PC-3 (cell line): ENCODE measurements at regions of chr13 and their contacts with region 1.

Region 1: GRCh38 chr13:68358294-68358705 is 1128.2 kb upstream of the PCDH9 start:
- DNase-seq: peak; percentile 61
- ATAC-seq: peak; percentile 88
- H3K4me3 ChIP-seq: peak overlapping the region; percentile 23; the same call in 1 of the 2 replicates
- H3K27ac ChIP-seq: peak overlapping the region; percentile 82
- H3K4me1 ChIP-seq: peaks cover 16% of the 10 kb centered on the region
- H3K27me3 ChIP-seq: no peaks in the 10 kb centered on the region
- CTCF ChIP-seq: no peak

Region 2: GRCh38 chr13:67914535-67914934 is 443.8 kb before region 1 on chr13:
- CTCF ChIA-PET with region 1: no interaction called
- POLR2A ChIA-PET with region 1: no interaction called
- intact Hi-C with region 1: no loop called
- DNase-seq: no peak
- ATAC-seq: no peak
- H3K4me3 ChIP-seq: no peak overlapping the region
- H3K27ac ChIP-seq: no peak overlapping the region
- H3K4me1 ChIP-seq: no peaks in the 10 kb centered on the region
- H3K27me3 ChIP-seq: no peaks in the 10 kb centered on the region
- CTCF ChIP-seq: no peak

Region 3: DNA sequence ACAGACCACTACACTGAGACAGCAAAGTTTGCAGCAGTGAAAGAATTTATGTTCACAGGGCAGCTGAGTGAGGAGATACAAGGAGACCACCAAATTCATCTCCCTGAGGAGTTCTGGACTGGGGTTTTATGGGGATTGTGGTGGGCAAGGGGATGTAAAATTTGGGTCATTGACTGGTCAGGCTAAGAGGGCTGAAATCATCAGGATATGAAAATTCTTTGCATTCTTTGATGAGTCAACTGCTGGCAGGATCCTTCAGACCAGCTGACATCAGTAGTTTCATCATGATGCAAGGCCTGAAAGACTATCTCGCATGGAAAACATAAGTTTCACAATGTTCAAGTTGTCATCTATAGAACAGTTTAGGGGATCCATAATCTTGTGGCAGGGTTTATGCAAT is 258.7 kb before region 1 on chr13:
- CTCF ChIA-PET with region 1: no interaction called
- POLR2A ChIA-PET with region 1: no interaction called
- intact Hi-C with region 1: no loop called
- DNase-seq: peak; percentile 61
- ATAC-seq: peak; percentile 73
- H3K4me3 ChIP-seq: no peak overlapping the region
- H3K27ac ChIP-seq: no peak overlapping the region
- H3K4me1 ChIP-seq: peaks cover 6% of the 10 kb centered on the region; the same call in 1 of the 2 replicates
- H3K27me3 ChIP-seq: no peaks in the 10 kb centered on the region
- CTCF ChIP-seq: no peak

Region 4: GRCh38 chr13:68369739-68370138 is 11.4 kb after region 1 on chr13:
- CTCF ChIA-PET with region 1: no interaction called
- POLR2A ChIA-PET with region 1: no interaction called
- intact Hi-C with region 1: loop called (anchors 1 kb)
- DNase-seq: peak; percentile 68
- ATAC-seq: peak; percentile 99
- H3K4me3 ChIP-seq: no peak overlapping the region
- H3K27ac ChIP-seq: peak overlapping the region; percentile 73
- H3K4me1 ChIP-seq: peaks cover 22% of the 10 kb centered on the region; the same call in 1 of the 2 replicates
- H3K27me3 ChIP-seq: no peaks in the 10 kb centered on the region
- CTCF ChIP-seq: no peak

Region 5: DNA sequence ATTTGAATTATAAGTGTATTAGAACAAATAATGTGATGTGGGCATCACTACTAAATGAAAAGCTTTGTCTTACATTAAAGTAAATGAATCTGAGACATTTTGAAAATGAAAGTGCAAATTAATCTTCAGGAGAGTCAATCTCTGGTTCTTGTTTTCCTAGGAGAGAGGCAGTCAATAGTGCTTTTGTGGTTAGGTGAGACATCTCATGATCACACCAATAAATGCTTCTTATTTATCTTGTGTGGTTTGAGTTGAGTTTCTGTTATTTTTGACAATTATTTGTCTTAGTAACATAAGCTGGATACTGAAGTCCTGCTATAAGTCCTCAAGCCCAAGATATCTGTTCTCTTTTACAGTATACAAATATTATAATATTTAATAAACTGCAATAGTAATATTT is 249.8 kb after region 1 on chr13:
- CTCF ChIA-PET with region 1: no interaction called
- POLR2A ChIA-PET with region 1: no interaction called
- intact Hi-C with region 1: loop called (anchors 1 kb)
- DNase-seq: peak; percentile 48
- ATAC-seq: peak; percentile 96
- H3K4me3 ChIP-seq: no peak overlapping the region
- H3K27ac ChIP-seq: no peak overlapping the region
- H3K4me1 ChIP-seq: no peaks in the 10 kb centered on the region
- H3K27me3 ChIP-seq: no peaks in the 10 kb centered on the region
- CTCF ChIP-seq: no peak

Region 6: DNA sequence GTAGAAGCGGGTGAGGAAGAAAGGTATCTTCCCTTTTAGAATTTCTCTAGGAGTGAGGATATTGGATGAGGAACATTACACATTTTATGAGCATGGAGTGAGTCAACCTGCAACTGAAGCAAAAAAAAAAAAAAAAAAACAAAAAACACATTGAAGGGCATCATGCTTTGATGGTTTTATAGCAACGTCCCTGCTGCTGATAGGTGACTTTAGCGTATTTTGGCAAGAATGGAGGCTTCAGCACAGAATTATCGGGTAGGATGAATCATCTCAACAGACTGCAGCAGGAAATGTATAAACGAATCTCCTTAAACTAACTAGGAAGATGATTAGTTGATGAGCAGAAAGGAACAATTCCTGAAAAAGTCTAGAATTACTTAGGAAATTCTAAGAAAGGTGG is 389.7 kb after region 1 on chr13:
- CTCF ChIA-PET with region 1: no interaction called
- POLR2A ChIA-PET with region 1: no interaction called
- intact Hi-C with region 1: loop called (anchors 2 kb)
- DNase-seq: peak; percentile 72
- ATAC-seq: peak; percentile 81
- H3K4me3 ChIP-seq: peak overlapping the region; percentile 24; the same call in 1 of the 2 replicates
- H3K27ac ChIP-seq: peak overlapping the region; percentile 69
- H3K4me1 ChIP-seq: peaks cover 28% of the 10 kb centered on the region
- H3K27me3 ChIP-seq: no peaks in the 10 kb centered on the region
- CTCF ChIP-seq: no peak